Transverse colon (tissue), 4 donors: ENCODE measurements at regions of chr20 and their contacts with region 1.

Region 1: GRCh38 chr20:9616833-9617489 is 102.6 kb downstream of the LAMP5 start:
- DNase-seq: peak; percentile 56
- H3K4me3 ChIP-seq: no peak overlapping the region
- H3K27ac ChIP-seq: no peak overlapping the region
- H3K4me1 ChIP-seq: no peaks in the 10 kb centered on the region
- H3K27me3 ChIP-seq: peaks cover 4% of the 10 kb centered on the region
- CTCF ChIP-seq: peak; percentile 64 to 82 (median 78)
- EP300 ChIP-seq: no peak
- POLR2A ChIP-seq: no peak

Region 2: DNA sequence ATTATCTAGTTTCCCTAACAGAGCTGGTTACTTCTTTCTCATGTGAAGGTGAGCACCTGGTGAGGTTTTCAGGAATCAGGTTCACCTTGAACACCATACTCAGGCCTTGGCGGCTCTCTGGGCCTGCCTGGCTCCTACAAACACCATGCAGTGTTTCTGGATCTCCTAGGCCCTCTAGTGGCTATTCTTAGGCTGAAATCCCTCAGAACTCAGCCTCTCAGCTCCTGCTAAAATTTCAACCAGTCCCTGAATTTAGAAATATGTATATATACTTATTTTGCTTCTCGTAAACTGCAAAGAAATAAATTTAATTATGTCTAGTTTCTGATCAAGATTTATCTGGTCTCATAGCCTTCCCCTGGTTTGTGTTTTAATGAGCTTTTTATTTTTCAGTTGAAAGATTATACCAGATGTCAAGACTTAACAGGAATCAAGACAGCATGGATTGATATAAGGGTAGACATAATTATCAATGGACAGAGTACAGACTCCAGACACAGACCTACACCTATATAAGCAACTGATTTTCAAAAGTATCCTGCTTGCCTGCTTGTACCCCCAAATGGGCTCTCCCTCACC is 473.7 kb after region 1 on chr20:
- in situ Hi-C with region 1: loop called in 3 of 4 experiments (anchors 25 kb)
- intact Hi-C with region 1: no loop called
- DNase-seq: peak; percentile 13
- H3K4me3 ChIP-seq: no peak overlapping the region
- H3K27ac ChIP-seq: no peak overlapping the region
- H3K4me1 ChIP-seq: no peaks in the 10 kb centered on the region
- H3K27me3 ChIP-seq: no peaks in the 10 kb centered on the region
- CTCF ChIP-seq: peak; percentile 48 to 73 (median 63)
- EP300 ChIP-seq: no peak
- POLR2A ChIP-seq: no peak